ENCODE measurements at regions of chr2 and their contacts with region 1.

Region 1: DNA sequence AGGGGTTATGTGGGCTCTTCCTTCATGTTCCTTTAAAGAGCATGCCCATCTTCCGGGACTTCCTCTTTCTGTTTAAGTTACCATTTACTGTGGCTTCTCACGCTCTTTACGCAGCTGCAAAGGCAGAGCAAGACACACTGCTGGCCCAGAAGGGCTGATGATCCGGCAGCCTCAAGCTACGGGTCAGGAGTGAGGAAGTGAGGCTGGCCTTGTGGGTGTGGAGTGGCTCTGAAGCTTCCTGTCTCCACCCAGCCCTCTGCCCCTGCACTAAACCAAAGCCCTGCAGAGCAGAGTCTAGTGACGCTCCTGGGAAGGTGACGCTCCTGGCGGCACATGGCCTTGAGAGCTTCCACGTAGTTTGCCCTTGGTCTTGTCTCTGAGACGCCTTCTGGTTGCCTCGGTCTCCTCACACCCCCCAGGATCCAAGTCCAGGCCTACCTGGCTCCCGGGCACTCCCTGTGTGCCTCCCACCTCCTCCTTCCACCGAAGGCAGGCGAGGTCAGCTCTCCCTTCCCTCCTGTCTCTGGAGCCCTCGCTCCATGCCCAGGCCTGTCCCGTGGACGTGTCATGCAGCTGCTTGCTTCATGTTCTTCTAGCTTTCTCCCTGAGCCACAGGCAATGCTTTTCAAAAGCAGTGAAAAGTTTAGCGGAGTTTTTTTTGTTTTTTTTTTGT is 50.3 kb downstream of the ARL4C start:
- DNase-seq: peak; percentile 36 to 91 (median 84)
- ATAC-seq: peak; percentile 65 to 87
- H3K4me3 Mint-ChIP-seq: peak overlapping the region; percentile 38 to 89 (median 80)
- H3K27ac Mint-ChIP-seq: peak overlapping the region; percentile 95 to 100 (median 99)
- H3K4me1 Mint-ChIP-seq: peaks cover 48 to 95% (median 90%) of the 10 kb centered on the region in 4 donors
- H3K27me3 Mint-ChIP-seq: no peaks in the 10 kb centered on the region

Region 2: GRCh38 chr2:234032279-234032856 is 414.2 kb before region 1 on chr2:
- POLR2A ChIA-PET with region 1: no interaction called
- DNase-seq: peak in 5 of 10 donors; percentile 23 to 59 (median 45)
- ATAC-seq: peak; percentile 20 to 89
- H3K4me3 Mint-ChIP-seq: peak overlapping the region in 7 of 10 donors; percentile 0 to 72 (median 39)
- H3K27ac Mint-ChIP-seq: peak overlapping the region in 9 of 10 donors; percentile 1 to 87 (median 20)
- H3K4me1 Mint-ChIP-seq: peaks cover 16 to 47% (median 31%) of the 10 kb centered on the region in 4 donors
- H3K27me3 Mint-ChIP-seq: peaks cover 0 to 11% (median 0%) of the 10 kb centered on the region in 5 donors

Region 3: DNA sequence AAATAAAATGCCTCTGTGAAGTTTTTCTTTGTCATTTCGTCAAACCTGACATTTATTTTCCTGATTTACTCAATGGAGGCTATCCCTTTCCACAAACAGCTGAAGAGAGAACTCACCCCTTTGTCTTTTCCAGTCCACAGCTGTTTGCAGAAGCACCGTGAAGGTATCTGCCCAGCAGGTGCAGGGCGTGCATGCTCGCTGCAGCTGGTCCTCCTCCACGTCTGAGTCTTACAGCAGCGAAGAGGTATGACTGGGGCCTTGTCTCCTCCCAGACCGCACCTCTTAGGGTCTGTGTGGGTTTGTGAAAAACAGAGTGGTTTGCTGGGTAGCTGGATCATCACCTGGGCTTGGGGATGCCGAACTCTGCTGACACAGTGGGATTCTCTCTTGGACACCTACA is 386.3 kb before region 1 on chr2:
- POLR2A ChIA-PET with region 1: no interaction called
- DNase-seq: no peak
- ATAC-seq: no peak
- H3K4me3 Mint-ChIP-seq: no peak overlapping the region
- H3K27ac Mint-ChIP-seq: peak overlapping the region in 1 of 10 donors; percentile 63
- H3K4me1 Mint-ChIP-seq: peaks cover 7 to 20% (median 14%) of the 10 kb centered on the region in 4 donors
- H3K27me3 Mint-ChIP-seq: peaks cover 0 to 18% (median 0%) of the 10 kb centered on the region in 5 donors

Region 4: DNA sequence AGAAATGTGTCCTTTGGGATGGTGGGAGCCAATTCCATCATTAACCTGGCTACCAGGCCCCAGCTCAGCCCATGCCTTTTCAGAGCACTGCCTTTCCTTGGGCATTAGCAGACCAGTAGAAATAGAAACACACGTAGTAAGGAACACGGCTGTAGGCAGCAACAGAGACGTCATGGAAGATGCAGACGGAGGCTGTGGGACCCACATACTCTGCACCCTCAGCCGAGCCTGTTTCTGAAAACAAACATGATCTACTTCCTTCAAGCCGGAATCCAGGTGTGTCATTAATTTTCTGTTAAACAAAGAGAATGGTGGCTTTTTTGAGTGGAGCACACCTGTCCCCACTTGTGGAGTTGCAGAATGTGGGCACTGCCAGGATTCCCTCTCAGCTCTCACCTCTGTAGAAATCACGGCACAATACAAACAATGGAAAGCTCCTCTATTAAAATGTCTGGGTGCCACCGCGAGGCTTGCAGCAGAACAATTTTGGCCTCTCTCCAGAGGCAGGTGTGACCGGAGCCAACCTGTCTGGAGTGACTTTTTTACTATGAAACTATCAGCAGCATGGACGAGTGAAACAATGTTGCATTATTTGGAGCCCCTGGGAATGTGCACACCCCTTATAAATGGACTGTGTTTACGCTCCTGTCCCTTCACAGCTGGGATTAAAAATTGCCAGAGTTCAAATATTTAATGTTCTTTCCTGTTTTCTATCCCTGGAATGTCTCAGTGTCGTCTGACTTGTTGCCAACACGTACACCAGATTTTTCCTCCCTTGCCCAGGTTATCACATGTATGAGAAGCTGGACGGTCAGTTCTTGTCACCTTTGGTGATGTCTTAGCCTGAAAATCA is 364.3 kb before region 1 on chr2:
- POLR2A ChIA-PET with region 1: no interaction called
- DNase-seq: no peak
- ATAC-seq: no peak
- H3K4me3 Mint-ChIP-seq: peak overlapping the region in 1 of 10 donors; percentile 43
- H3K27ac Mint-ChIP-seq: no peak overlapping the region
- H3K4me1 Mint-ChIP-seq: peaks cover 9 to 29% (median 22%) of the 10 kb centered on the region in 4 donors
- H3K27me3 Mint-ChIP-seq: peaks cover 0 to 17% (median 4%) of the 10 kb centered on the region in 5 donors

Region 5: DNA sequence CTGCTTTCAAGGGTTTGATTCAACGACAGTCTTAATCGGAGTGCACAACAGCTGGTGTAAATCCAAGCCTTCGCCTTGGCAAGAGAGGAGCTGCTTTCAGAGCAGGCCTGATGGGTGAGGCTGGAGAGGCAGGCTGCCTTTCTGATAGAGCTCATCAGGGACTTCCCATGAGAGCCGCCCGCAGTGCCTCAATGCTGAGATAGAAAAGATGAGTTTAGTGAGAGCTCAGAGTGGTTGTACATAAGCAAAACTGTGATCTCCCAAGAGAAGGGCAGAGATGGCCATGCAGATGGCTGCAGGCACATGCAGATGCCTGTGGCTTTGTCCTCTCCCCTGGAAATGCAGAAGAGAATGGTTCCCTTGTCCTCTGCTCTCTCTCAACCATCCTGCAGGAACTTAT is 71.8 kb before region 1 on chr2:
- POLR2A ChIA-PET with region 1: interaction called, 11 read pairs
- DNase-seq: no peak
- ATAC-seq: no peak
- H3K4me3 Mint-ChIP-seq: no peak overlapping the region
- H3K27ac Mint-ChIP-seq: peak overlapping the region in 6 of 10 donors; percentile 47 to 96 (median 84)
- H3K4me1 Mint-ChIP-seq: peaks cover 27 to 54% (median 52%) of the 10 kb centered on the region in 4 donors
- H3K27me3 Mint-ChIP-seq: no peaks in the 10 kb centered on the region

Region 6: GRCh38 chr2:234483568-234484251 is 37.2 kb after region 1 on chr2:
- POLR2A ChIA-PET with region 1: interaction called, 80 read pairs
- DNase-seq: peak; percentile 59 to 94 (median 86)
- ATAC-seq: peak; percentile 74 to 79
- H3K4me3 Mint-ChIP-seq: peak overlapping the region; percentile 41 to 84 (median 79)
- H3K27ac Mint-ChIP-seq: peak overlapping the region; percentile 89 to 99 (median 97)
- H3K4me1 Mint-ChIP-seq: peaks cover 24 to 92% (median 73%) of the 10 kb centered on the region in 4 donors
- H3K27me3 Mint-ChIP-seq: no peaks in the 10 kb centered on the region

Region 7: GRCh38 chr2:234488913-234489451 is 42.4 kb after region 1 on chr2:
- POLR2A ChIA-PET with region 1: interaction called, 289 read pairs
- DNase-seq: peak; percentile 40 to 88 (median 80)
- ATAC-seq: peak; percentile 75 to 82
- H3K4me3 Mint-ChIP-seq: peak overlapping the region; percentile 85 to 100 (median 90)
- H3K27ac Mint-ChIP-seq: peak overlapping the region; percentile 95 to 100 (median 99)
- H3K4me1 Mint-ChIP-seq: peaks cover 44 to 93% (median 85%) of the 10 kb centered on the region in 4 donors
- H3K27me3 Mint-ChIP-seq: no peaks in the 10 kb centered on the region

Measured in naive thymus-derived CD8-positive, alpha-beta T cell (primary cell).